Tibial artery (tissue), 4 donors: ENCODE measurements at regions of chr9 and their contacts with region 1.

Region 1: DNA sequence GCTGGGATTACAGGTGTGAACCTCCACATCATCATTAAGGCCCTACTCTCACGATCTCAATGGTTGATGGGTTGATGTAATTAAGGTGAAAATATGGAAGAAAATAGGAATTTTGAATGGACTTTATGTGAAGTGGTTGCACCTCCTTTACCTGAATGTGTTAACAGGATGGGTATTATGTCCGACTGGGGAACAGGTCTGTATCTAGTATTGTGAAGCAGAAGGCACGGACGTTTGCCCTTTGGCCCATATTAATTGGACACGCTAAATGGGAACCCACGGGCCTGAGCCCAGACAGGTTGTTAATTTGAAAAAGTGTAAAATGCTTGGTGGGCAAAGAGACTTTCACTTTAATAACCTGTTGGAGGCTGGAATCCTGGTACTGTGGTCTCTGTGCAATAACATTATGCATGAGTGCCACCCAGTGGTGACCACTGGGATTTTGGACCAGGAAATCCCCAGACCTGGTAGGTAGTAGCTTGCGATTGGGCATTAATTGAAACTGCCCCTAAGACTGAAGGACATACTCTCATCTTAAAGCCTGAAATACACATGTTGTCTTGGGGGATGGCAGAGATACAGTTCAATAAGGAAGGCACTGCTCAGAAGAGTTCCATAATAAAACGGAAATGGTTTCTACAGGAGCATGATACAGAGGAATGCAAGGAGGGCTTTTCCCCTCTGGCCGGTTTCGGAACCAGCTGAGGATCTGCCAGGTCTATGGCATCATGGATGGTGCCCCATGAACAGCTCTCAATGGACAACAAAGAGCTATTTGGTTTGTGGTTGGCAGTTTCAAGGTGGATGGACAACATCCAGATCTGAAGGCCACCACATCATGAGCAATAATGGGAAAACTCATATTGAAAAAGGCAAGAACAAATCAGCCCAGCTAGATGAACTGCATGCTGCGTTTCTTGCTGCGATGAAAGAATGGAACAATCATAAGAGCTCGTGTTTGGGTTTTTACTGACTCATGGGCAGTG is 26.2 kb upstream of the BICD2 start:
- DNase-seq: peak; percentile 83
- H3K4me3 ChIP-seq: no peak overlapping the region
- H3K27ac ChIP-seq: no peak overlapping the region
- H3K4me1 ChIP-seq: no peaks in the 10 kb centered on the region
- H3K27me3 ChIP-seq: peaks cover 0 to 12% of the 10 kb centered on the region in 2 donors
- CTCF ChIP-seq: peak; percentile 77 to 86

Region 2: GRCh38 chr9:92716557-92716956 is 74.3 kb before region 1 on chr9:
- intact Hi-C with region 1: loop called (anchors 5 kb)
- DNase-seq: peak in 1 of 2 donors; percentile 50
- H3K4me3 ChIP-seq: no peak overlapping the region
- H3K27ac ChIP-seq: no peak overlapping the region
- H3K4me1 ChIP-seq: no peaks in the 10 kb centered on the region
- H3K27me3 ChIP-seq: no peaks in the 10 kb centered on the region
- CTCF ChIP-seq: peak; percentile 81 to 89